ENCODE measurements at regions of chr6 and their contacts with region 1.

Region 1: GRCh38 chr6:131532580-131533039 is 40.4 kb upstream of the ARG1 start:
- DNase-seq: peak; percentile 61
- H3K4me3 Mint-ChIP-seq: no peak overlapping the region
- H3K27ac Mint-ChIP-seq: peak overlapping the region; percentile 73
- H3K4me1 Mint-ChIP-seq: peaks cover 34% of the 10 kb centered on the region
- H3K27me3 Mint-ChIP-seq: peaks cover 12% of the 10 kb centered on the region

Region 2: GRCh38 chr6:130885392-130886192 is 647.0 kb before region 1 on chr6:
- intact Hi-C with region 1: loop called (anchors 1 kb)
- DNase-seq: peak; percentile 92
- H3K4me3 Mint-ChIP-seq: no peak overlapping the region
- H3K27ac Mint-ChIP-seq: no peak overlapping the region
- H3K4me1 Mint-ChIP-seq: no peaks in the 10 kb centered on the region
- H3K27me3 Mint-ChIP-seq: no peaks in the 10 kb centered on the region

Region 3: DNA sequence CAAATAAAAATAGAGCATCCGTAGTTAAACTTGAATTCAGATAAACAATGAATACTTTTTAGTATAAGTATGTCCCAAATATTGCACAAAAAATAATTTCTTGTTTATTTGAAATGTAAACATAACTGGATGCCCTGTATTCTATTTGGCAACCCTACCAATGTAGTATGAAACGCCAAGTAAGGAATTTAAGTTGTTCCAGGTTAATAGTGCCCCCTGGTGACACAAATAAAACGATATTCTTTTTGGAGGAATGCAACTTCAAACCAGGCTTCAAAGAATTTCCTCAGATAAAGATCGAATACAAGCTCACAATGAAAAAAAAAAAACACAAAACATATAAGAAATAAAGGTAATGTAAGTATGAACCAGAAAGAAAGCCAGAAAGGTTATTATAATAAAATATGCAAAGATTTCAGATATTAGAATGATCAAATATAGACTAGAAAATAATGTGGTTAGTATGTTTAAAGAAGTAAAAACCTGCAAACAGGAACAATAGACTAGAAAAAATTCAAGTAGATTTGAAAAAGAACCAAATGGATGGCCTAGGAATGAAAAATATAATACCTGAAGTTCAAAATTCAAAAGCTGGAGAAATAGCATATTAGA is 415.8 kb before region 1 on chr6:
- intact Hi-C with region 1: loop called (anchors 1 kb)
- DNase-seq: peak; percentile 62
- H3K4me3 Mint-ChIP-seq: no peak overlapping the region
- H3K27ac Mint-ChIP-seq: no peak overlapping the region
- H3K4me1 Mint-ChIP-seq: no peaks in the 10 kb centered on the region
- H3K27me3 Mint-ChIP-seq: peaks cover 7% of the 10 kb centered on the region

Region 4: DNA sequence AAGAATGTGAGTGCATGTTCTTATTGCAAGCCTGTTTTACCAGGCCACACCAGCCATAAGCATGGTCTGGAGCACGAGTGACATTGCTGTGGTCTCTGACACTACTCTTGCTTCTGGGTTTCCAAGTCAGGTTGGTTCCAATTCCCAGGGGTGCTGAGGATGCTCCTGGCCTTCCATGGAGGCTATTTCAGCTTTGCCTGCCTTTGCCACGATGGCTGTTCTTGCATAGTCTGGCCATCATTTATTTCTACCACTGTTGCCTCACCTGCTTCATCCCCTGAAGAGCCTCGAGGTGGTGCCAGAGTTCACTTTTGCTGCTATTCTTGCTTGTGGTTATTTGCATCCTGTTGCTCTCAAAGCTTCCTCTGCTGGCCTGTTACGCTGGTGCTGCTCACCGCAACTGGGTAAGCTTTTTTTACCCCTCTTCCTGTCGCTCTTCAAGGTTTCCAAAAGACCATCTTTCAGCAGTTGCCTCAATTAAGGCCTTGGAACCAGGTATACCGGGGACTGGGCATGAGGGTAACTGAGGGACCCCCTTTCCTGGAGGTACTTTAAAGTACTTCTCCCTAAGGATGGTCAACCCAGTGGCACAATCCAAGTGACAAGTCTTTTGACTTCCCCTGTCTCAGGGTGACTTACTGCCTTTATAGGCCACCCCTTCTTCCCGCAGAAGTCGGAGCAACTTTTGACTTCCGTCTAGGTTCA is 332.9 kb before region 1 on chr6:
- intact Hi-C with region 1: loop called (anchors 1 kb)
- DNase-seq: peak; percentile 93
- H3K4me3 Mint-ChIP-seq: peak overlapping the region; percentile 81
- H3K27ac Mint-ChIP-seq: peak overlapping the region; percentile 95
- H3K4me1 Mint-ChIP-seq: peaks cover 45% of the 10 kb centered on the region
- H3K27me3 Mint-ChIP-seq: no peaks in the 10 kb centered on the region

Region 5: DNA sequence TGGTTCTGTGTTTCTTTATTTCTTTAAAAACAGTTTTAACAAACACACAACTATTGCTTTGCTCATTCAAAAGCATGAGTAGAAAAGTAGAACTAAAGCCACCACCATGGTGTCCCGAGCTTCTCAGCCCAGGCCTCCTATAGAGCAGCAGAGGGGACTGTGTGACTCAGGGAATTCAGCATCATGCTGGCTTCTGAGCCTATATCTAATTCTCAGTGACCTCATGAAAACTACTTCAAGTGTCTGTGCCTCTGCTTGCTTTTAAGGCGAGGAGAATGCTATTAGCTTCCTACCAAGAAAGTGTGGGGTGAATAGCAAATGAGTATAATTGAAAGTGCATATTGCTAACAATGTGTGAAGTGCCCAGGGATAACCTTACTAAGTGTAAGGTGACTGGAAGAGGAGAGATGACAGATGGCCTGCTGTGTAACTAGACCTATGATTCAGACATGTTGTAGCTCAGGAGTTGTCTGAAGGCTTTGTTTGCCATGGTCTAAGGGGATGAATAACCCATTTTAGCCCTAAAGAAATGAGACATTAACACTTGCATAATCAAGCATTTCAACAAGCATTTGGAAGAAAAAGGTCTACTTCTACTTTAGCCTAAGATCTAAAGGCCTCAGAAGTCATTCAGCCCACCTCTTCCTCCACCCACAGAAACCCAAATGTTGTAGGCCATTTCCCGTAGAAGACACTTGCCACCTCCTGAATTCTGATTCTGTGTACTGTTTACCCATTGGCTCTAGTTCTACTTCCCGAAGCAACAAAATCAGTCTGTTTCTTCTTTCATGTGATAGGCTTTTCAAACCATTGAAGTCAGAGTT is 81.1 kb before region 1 on chr6:
- intact Hi-C with region 1: loop called (anchors 5 kb)
- DNase-seq: no peak
- H3K4me3 Mint-ChIP-seq: peak overlapping the region; percentile 32
- H3K27ac Mint-ChIP-seq: peak overlapping the region; percentile 88
- H3K4me1 Mint-ChIP-seq: peaks cover 35% of the 10 kb centered on the region
- H3K27me3 Mint-ChIP-seq: no peaks in the 10 kb centered on the region

Region 6: DNA sequence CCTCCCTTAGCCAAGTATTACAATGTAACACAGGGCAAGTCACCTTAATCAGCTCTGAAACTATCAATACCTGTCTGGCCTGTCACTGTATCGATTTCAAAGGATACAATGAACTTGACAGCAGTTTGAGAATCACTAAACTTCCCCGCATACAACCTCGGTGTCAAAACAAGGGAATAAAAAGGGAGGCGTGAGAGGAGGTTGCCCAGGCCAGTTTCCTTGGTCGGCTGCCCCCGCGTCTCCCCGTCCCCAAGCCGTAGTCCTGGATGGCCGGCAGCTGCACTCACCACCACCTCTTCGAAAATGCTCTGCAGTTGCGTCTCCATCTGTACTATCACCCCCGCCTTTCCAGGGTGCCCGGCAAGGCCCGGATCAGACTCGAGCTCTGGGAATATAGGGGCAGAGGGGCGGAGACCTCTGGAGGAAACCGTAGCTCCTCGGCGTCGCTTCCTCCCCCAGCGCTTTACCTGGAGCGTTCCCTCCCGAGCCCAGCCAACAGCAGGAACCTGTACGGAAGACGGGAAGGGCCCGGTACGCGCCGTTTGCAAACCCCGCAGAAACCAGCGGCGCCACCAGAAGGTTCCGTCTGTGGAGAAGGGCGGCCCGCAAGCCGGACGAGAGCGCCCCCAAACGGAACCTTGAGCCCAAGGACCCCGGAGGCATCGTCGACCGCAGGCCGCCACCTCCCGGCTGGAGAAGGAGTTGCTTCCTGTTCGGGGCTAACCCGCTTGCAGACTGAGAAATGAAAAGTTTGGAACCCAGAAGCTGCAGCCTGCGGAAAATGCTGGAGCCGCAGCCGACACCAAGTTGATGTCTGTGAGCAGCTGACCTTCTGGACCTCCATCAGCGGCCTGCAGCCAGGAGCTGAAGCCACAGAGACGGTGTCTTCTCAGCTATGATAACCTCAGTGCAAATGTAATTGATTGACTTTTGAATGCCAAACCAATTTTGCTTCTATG is 95.4 kb after region 1 on chr6 and contains the start of gene MED23:
- intact Hi-C with region 1: loop called (anchors 5 kb)
- DNase-seq: peak; percentile 99
- H3K4me3 Mint-ChIP-seq: peak within 1 kb of the TSS; percentile 97
- H3K27ac Mint-ChIP-seq: peak within 1 kb of the TSS; percentile 92
- H3K4me1 Mint-ChIP-seq: peaks cover 22% of the 10 kb centered on the region
- H3K27me3 Mint-ChIP-seq: no peaks in the 10 kb centered on the region
- total RNA-seq, gene MED23: 29.2 and 30.2 TPM in 2 replicates